AG04449 (cell line): ENCODE measurements at regions of chr14 and their contacts with region 1.

Region 1: DNA sequence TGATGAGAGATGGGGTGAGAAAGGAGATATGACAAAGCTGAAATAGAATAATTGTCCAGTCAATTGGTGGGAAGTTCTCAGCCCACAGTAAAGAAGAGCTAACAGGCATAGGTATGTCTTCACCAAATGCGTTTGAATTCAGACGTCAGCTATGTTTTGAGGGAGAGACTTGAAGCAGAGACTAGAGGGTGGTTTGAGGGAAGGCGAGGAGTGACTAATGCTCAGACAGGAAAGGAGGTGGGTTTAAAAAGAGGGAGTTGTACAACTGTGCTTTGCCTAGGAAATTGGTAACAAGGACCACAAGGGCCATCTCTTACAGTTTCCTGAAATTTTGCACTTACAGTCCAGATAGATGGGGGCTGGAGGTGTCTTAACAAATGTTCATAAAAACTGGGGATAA is 6.4 kb downstream of the JKAMP start:
- DNase-seq: no peak
- H3K4me3 ChIP-seq: no peak overlapping the region
- CTCF ChIP-seq: no peak

Region 2: DNA sequence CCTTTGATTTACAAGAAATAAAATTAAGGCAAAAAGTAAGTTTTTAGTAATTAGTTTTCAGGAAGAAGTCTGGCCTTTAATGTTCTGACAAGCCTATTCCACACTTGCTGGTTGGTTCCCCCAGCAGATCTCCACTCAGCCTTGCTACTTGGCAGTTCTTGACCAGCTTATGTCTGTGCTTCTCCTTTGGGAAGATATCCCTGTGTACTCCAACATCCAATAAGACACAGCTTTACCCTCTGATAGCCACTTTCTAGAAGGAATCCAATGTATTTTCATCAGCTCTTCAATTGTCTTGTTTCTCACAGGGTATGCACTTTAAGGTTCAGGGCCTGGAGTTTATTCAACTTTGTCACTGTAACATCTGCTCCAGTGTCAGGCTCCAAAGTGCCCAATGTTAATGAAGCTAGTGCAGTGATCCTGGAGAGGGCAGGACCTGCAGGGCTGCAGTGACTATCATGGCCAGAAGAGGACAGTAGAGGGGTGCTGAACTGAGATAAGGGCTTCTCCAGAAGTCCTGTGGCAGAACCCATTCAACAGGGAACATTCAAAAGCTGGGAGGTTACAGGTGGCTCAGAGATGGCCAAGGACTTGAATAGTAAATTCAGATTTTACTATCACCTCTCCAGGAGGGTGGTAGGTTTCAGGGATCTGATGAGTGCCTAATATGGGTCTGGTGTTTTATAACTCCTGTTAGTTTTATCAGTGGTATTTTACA is 16.5 kb after region 1 on chr14:
- CTCF ChIA-PET with region 1: interaction called, 17 read pairs
- POLR2A ChIA-PET with region 1: no interaction called
- DNase-seq: no peak
- H3K4me3 ChIP-seq: no peak overlapping the region
- CTCF ChIP-seq: peak; percentile 84